ENCODE measurements at regions of chr4 and their contacts with region 1.

Region 1: DNA sequence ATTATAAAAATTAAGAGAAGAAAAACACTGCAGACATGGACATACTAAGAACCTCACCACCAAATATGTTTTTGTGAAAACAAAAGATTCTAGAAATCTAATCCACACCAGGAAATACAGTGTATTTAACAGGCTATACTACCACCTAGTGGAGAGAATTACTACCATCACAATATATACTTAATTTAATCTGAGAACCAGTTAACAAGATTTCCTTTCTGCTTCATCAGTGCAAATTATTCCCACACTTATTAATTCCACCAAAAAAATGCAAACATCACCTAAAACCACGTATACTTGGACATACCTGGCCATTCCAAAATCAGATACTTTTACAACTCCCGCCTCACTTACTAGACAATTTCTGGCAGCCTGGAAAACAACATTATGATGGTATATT is 7.0 kb upstream of the TXK start:
- DNase-seq: no peak
- H3K4me3 ChIP-seq: no peak overlapping the region
- H3K27me3 ChIP-seq: peaks cover 1% of the 10 kb centered on the region; the same call in 1 of the 2 replicates
- CTCF ChIP-seq: peak; percentile 42

Region 2: GRCh38 chr4:48127682-48128394 is 13.2 kb before region 1 on chr4:
- CTCF ChIA-PET with region 1: interaction called, 27 read pairs
- POLR2A ChIA-PET with region 1: no interaction called
- DNase-seq: peak; percentile 94
- H3K4me3 ChIP-seq: no peak overlapping the region
- H3K27me3 ChIP-seq: no peaks in the 10 kb centered on the region
- CTCF ChIP-seq: peak; percentile 64